Activated CD8-positive, alpha-beta T cell treated with anti-CD3 and anti-CD28 coated beads for 36 hours (primary cell): ENCODE measurements at regions of chr20 and their contacts with region 1.

Region 1: GRCh38 chr20:53750827-53751619 is 157.4 kb upstream of the ZNF217 start:
- DNase-seq: peak; percentile 76
- ATAC-seq: peak; percentile 76
- H3K4me3 Mint-ChIP-seq: peak overlapping the region; percentile 59
- H3K27ac Mint-ChIP-seq: peak overlapping the region; percentile 97
- H3K4me1 Mint-ChIP-seq: peaks cover 62% of the 10 kb centered on the region
- H3K27me3 Mint-ChIP-seq: no peaks in the 10 kb centered on the region
- CTCF ChIP-seq: no peak

Region 2: DNA sequence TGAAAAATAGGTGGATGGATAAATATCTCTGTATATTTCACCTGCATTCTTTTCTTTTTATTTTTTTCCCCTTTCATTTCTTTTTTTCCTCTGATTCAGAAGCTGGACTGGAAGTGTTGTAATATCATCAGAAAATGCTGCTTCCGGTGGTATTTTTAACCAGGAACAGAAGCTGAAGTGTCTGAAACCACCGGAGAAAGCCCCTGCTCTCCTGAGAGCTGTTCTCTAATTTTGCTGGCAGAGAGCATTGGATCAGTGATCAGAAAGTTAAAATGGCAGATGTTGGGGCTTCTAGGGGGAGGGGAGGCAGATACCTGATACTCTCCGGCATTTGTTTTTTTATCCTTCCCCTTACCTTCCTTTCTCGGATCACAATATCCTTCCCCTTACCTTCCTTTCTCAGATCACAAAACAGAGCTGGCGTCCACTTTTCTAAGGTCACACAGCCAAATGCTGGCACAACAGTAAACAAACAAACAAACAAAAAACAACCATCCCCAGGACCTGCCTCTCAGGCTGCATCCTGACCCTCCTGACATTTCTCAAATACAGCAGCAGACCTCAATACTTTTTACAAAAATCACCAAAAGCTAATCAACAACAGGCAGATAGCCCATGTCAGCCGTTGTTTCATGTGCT is 14.1 kb before region 1 on chr20:
- CTCF ChIA-PET with region 1: interaction called, 11 read pairs
- POLR2A ChIA-PET with region 1: interaction called, 8 read pairs
- intact Hi-C with region 1: no loop called
- DNase-seq: peak; percentile 51
- ATAC-seq: peak; percentile 60
- H3K4me3 Mint-ChIP-seq: peak overlapping the region; percentile 60
- H3K27ac Mint-ChIP-seq: peak overlapping the region; percentile 87
- H3K4me1 Mint-ChIP-seq: peaks cover 55% of the 10 kb centered on the region
- H3K27me3 Mint-ChIP-seq: no peaks in the 10 kb centered on the region
- CTCF ChIP-seq: no peak

Region 3: DNA sequence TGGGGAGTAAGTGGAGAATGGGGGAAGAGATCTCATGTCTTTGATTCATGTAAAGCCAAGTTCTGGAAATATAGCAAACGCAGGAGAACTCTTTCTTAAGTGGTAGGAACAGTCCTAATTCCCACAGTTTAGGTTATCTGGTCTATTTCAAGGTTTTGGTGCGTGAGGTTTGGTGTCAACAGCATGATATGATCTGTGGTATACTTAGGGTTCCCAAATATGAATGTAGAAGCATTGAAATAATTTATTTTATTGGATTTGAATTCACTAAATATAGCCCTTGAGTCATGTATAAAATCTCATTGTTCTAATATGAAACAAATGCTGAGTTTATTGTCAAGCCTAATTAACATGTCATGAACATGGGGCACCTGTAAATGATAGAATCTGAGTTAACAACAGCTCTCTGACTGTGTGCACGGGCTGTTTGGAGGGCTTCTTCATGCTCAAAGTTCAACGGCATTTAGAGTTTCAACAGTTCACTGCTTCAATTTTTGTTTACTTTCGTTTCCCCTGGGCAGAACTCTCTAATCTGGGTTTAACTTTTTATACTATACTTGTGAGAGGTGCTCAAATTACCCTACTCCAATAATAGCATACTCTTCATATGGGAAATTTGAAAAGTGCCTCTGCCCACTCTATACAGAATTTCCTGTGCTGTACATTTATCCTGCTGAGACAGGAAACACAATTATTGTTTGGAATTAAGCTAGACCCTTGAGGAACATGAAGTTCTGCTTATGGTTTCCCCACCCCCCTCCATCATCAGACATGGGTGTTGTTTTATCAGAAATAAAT is 78.9 kb after region 1 on chr20:
- CTCF ChIA-PET with region 1: no interaction called
- POLR2A ChIA-PET with region 1: interaction called, 4 read pairs
- intact Hi-C with region 1: loop called (anchors 5 kb)
- DNase-seq: peak; percentile 39
- ATAC-seq: peak; percentile 54
- H3K4me3 Mint-ChIP-seq: peak overlapping the region; percentile 71
- H3K27ac Mint-ChIP-seq: peak overlapping the region; percentile 96
- H3K4me1 Mint-ChIP-seq: peaks cover 53% of the 10 kb centered on the region
- H3K27me3 Mint-ChIP-seq: no peaks in the 10 kb centered on the region
- CTCF ChIP-seq: no peak

Region 4: DNA sequence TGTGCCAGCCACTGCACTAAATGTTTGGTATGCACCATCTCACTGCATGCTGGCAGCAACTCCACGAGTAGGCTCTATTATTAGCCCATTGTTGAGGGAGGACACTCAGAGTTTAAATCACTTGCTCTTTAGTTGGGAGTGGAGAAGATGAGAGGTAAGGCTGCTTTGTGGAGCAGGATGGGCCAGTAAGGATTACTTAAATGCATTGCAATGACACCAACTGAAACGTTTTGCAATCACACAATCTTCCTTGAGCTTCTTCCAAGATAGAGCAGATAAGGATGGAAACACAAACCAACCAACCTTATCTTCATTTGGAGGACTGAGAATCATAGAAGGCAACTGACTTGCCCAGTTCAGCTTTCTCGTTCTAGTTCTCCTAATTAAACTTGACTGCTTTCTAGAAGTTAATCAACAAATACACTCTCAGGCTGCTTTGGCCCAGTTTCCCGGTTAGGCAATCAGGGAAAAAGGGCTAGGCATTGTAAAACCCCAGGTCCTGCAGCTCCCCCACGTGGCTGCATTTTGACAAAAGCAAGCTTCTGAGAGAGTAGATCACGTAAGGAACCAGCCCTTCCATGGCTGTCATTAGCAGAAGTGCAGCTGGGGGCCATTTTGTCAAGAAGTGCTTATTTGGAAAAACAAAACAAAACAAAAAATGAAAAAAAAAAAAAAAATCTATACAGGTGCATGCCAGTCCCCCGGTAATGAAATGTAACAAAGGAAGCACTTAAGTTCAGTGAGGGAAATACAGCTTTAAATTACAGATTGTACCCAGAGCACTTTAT is 188.7 kb after region 1 on chr20:
- CTCF ChIA-PET with region 1: interaction called, 10 read pairs
- POLR2A ChIA-PET with region 1: no interaction called
- intact Hi-C with region 1: loop called (anchors 5 kb)
- DNase-seq: peak; percentile 92
- ATAC-seq: peak; percentile 84
- H3K4me3 Mint-ChIP-seq: no peak overlapping the region
- H3K27ac Mint-ChIP-seq: peak overlapping the region; percentile 22
- H3K4me1 Mint-ChIP-seq: peaks cover 45% of the 10 kb centered on the region
- H3K27me3 Mint-ChIP-seq: no peaks in the 10 kb centered on the region
- CTCF ChIP-seq: peak; percentile 85